Activated T-helper 2 cell treated with anti-CD3 and anti-CD28 coated beads, Interferon-gamma antibody, Interleukin-2, Interleukin-4, amounts not matched to agents 10 μg/mL and 5 μg/mL and 100 μg/mL, durations not matched to agents 14 hours and 24 hours and 36 hours (primary cell): ENCODE measurements at regions of chrX and their contacts with region 1.

Region 1: GRCh38 chrX:137427806-137428205 is 138.1 kb upstream of the ZIC3 start:
- DNase-seq: no peak
- H3K4me3 Mint-ChIP-seq: peak overlapping the region; percentile 58
- H3K27ac Mint-ChIP-seq: no peak overlapping the region
- H3K4me1 Mint-ChIP-seq: peaks cover 2% of the 10 kb centered on the region
- H3K27me3 Mint-ChIP-seq: peaks cover 58% of the 10 kb centered on the region

Region 2: GRCh38 chrX:137352101-137352666 is 75.6 kb before region 1 on chrX:
- intact Hi-C with region 1: no loop called
- DNase-seq: no peak
- H3K4me3 Mint-ChIP-seq: no peak overlapping the region
- H3K27ac Mint-ChIP-seq: no peak overlapping the region
- H3K4me1 Mint-ChIP-seq: no peaks in the 10 kb centered on the region
- H3K27me3 Mint-ChIP-seq: no peaks in the 10 kb centered on the region

Region 3: GRCh38 chrX:137550665-137551261 is 123.0 kb after region 1 on chrX:
- intact Hi-C with region 1: loop called (anchors 5 kb)
- DNase-seq: no peak
- H3K4me3 Mint-ChIP-seq: no peak overlapping the region
- H3K27ac Mint-ChIP-seq: no peak overlapping the region
- H3K4me1 Mint-ChIP-seq: no peaks in the 10 kb centered on the region
- H3K27me3 Mint-ChIP-seq: peaks cover 43% of the 10 kb centered on the region

Region 4: DNA sequence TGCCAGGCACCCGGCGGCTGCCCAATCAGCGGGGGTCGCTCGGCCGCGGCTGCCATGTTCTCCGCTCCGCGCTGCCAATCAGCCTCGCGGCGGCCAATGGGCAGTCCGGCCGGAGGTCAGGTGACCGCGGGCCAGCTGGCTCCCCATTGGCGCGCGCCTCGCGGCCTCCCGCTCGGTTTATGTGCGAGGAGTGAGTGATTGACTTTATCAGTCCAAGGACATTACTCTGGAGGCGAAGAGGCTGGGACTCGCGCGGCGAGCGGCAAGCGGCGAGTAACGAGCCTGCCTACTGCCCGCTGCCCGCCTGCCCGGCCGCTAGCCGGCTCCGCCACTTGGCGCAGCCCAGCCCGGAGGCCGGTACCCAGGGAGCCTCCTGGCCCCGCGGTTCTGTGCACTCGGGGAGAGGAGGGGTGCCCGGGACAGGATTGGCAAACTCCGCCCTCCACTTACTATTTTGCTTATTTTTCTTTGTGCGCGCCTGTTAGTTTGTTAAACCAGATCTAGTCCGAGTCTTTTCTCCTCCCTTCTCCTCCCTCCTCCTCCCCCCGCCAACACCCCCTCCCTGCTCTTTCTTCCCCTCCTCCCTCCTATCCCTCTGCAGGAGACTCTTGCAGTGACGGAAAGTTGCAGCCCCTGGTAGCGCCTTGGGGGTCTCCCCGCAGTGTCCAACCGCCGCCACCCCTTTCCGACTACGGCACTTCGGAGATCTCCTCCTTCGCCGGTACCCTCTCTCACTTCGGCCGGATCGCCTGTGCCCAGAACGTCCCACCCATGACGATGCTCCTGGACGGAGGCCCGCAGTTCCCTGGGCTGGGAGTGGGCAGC is 138.3 kb after region 1 on chrX and contains the start of gene ZIC3:
- intact Hi-C with region 1: loop called (anchors 2 kb)
- DNase-seq: no peak
- H3K4me3 Mint-ChIP-seq: no peak within 1 kb of the TSS
- H3K27ac Mint-ChIP-seq: no peak within 1 kb of the TSS
- H3K4me1 Mint-ChIP-seq: no peaks in the 10 kb centered on the region
- H3K27me3 Mint-ChIP-seq: peaks cover 56% of the 10 kb centered on the region
- total RNA-seq, gene ZIC3: not detected in 2 replicates